ENCODE measurements at regions of chr1 and their contacts with region 1.

Region 1: DNA sequence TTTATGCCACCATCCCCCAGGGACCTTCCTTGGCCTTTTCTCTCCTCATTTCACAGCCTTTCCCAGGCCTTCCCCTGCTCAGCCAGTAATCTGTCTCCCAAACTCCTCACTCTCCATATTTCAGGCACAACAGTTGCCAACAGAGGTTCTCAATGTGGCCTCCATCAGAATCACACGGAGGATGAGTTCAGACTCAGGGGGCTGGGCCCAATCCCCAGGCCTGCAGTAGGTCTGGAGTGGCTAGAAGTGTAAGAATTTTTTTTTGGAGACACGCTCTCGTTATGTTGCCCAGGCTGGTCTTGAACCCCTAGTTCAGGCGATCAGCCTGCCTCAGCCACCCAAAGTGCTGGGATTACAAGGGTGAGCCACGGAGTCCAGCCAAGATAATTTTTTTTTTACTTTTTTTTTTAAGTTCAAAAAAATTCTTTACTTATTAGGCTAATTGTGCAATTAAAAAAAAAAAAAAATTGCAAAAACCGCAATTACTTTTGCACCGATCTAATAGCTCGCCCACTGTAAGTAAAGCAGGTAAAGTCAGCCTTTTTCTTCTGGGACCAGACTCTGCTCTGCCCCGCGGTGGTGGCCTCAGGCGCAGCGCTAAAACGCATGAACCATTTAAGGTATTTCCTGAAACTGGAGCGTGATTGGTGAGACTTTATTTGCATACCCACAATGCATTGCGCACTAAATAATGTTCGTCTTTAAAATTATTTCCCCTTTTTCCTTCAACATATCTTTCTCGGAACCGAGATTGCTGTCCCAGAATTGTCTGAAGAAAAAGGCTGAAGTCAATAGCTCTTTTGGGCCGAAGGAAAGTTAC is 18.7 kb downstream of the KIAA2013 start:
- DNase-seq: peak; percentile 86 to 98 (median 90)
- ATAC-seq: peak; percentile 72
- H3K4me3 ChIP-seq: no peak overlapping the region
- H3K27ac ChIP-seq: peak overlapping the region; percentile 100
- H3K4me1 ChIP-seq: peaks cover 15 to 27% of the 10 kb centered on the region in 2 experiments
- H3K27me3 ChIP-seq: no peaks in the 10 kb centered on the region
- CTCF ChIP-seq: peak; percentile 87 to 98 (median 96)
- EP300 ChIP-seq: no peak
- POLR2A ChIP-seq: no peak
- RAD21 ChIP-seq: peak; percentile 61 to 78

Region 2: GRCh38 chr1:11681071-11681771 is 226.3 kb before region 1 on chr1 and contains the start of gene MAD2L2:
- CTCF ChIA-PET with region 1: no interaction called
- POLR2A ChIA-PET with region 1: interaction called, 13 read pairs
- in situ Hi-C with region 1: no loop called
- intact Hi-C with region 1: no loop called
- DNase-seq: peak; percentile 95 to 99 (median 98)
- ATAC-seq: peak; percentile 94
- H3K4me3 ChIP-seq: peak within 1 kb of the TSS; percentile 99
- H3K27ac ChIP-seq: peak within 1 kb of the TSS; percentile 93
- H3K4me1 ChIP-seq: peaks cover 11 to 32% of the 10 kb centered on the region in 2 experiments
- H3K27me3 ChIP-seq: no peaks in the 10 kb centered on the region
- CTCF ChIP-seq: no peak
- EP300 ChIP-seq: peak; percentile 40; the same call in 1 of the 2 replicates
- POLR2A ChIP-seq: peak; percentile 81
- RAD21 ChIP-seq: no peak
- polyA plus RNA-seq, gene MAD2L2: 12.4 to 25.9 TPM

Region 3: GRCh38 chr1:11797525-11798216 is 109.8 kb before region 1 on chr1:
- CTCF ChIA-PET with region 1: no interaction called
- POLR2A ChIA-PET with region 1: interaction called, 107 read pairs
- in situ Hi-C with region 1: no loop called
- intact Hi-C with region 1: loop called (anchors 1 kb)
- DNase-seq: peak; percentile 84 to 98 (median 88)
- ATAC-seq: peak; percentile 76
- H3K4me3 ChIP-seq: peak overlapping the region; percentile 0; the same call in 1 of the 2 replicates
- H3K27ac ChIP-seq: peak overlapping the region; percentile 100
- H3K4me1 ChIP-seq: peaks cover 67 to 71% of the 10 kb centered on the region in 2 experiments
- H3K27me3 ChIP-seq: no peaks in the 10 kb centered on the region
- CTCF ChIP-seq: no peak
- EP300 ChIP-seq: peak; percentile 99
- POLR2A ChIP-seq: no peak; the same call in none of the 2 replicates
- RAD21 ChIP-seq: peak; percentile 4 to 35; a peak in 2 of 4 replicates

Region 4: DNA sequence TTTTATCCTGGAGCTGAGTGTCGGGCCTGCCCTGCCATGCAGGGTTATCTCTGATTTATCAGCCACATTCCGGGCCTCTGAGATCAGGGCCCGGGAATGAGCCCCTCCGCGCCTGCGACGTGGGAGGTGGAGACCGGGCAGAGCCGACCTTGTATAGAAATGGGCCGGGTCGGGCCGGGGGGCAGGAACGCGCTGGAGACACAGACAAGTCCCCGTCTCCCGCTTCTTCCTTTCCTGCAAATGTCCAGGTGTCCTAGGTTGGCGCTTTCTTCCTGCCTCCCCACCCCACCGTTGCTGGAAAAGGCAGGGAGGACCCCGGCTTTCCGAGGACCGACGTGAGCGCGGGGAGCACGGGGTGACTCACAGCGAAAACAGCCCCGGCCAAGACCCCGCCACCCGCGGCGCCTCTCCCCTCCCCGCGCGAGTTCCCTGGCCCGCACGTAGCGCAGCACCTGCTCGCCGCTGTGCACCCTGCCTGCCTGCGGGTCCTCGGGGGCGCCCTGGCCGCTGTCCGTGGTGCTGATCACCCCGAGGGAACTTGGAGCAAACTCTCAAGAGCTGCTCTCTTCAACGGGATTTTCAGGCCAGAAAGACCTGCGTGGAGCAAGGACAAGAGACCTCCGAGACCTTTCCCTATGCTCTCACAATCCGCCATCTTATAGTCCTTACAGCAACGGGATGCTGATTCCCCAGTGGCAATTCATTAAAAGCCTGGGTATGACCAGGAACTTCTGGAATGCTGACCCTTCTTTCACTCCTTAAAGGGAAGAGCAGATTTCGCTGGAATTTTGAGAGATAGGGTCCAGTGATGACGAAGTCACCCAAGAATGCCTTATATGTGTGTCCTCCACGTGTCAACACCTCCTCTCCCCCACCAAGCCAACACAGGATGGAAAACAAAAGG is 48.3 kb before region 1 on chr1:
- CTCF ChIA-PET with region 1: no interaction called
- POLR2A ChIA-PET with region 1: interaction called, 96 read pairs
- in situ Hi-C with region 1: no loop called
- intact Hi-C with region 1: no loop called
- DNase-seq: peak; percentile 89 to 97 (median 94)
- ATAC-seq: peak; percentile 99
- H3K4me3 ChIP-seq: no peak overlapping the region
- H3K27ac ChIP-seq: no peak overlapping the region
- H3K4me1 ChIP-seq: peaks cover 0 to 10% of the 10 kb centered on the region in 2 experiments; a peak in 2 of 5 replicates
- H3K27me3 ChIP-seq: peaks cover 40 to 45% of the 10 kb centered on the region in 2 experiments; a peak in 4 of 5 replicates
- CTCF ChIP-seq: peak; percentile 60 to 79 (median 69)
- EP300 ChIP-seq: no peak
- POLR2A ChIP-seq: no peak
- RAD21 ChIP-seq: peak in 1 of 2 experiments; percentile 46; a peak in 2 of 4 replicates

Region 5: GRCh38 chr1:11934302-11935056 is 27.0 kb after region 1 on chr1 and contains the start of gene PLOD1:
- CTCF ChIA-PET with region 1: no interaction called
- POLR2A ChIA-PET with region 1: interaction called, 130 read pairs
- in situ Hi-C with region 1: no loop called
- intact Hi-C with region 1: no loop called
- DNase-seq: peak; percentile 95 to 97 (median 96)
- ATAC-seq: peak; percentile 93
- H3K4me3 ChIP-seq: peak within 1 kb of the TSS; percentile 75
- H3K27ac ChIP-seq: peak within 1 kb of the TSS; percentile 97
- H3K4me1 ChIP-seq: peaks cover 41 to 56% of the 10 kb centered on the region in 2 experiments
- H3K27me3 ChIP-seq: no peaks in the 10 kb centered on the region; a peak in 1 of 5 replicates
- CTCF ChIP-seq: no peak
- EP300 ChIP-seq: no peak
- POLR2A ChIP-seq: peak; percentile 88
- RAD21 ChIP-seq: no peak
- polyA plus RNA-seq, gene PLOD1: 16.6 to 27.1 TPM

Region 6: DNA sequence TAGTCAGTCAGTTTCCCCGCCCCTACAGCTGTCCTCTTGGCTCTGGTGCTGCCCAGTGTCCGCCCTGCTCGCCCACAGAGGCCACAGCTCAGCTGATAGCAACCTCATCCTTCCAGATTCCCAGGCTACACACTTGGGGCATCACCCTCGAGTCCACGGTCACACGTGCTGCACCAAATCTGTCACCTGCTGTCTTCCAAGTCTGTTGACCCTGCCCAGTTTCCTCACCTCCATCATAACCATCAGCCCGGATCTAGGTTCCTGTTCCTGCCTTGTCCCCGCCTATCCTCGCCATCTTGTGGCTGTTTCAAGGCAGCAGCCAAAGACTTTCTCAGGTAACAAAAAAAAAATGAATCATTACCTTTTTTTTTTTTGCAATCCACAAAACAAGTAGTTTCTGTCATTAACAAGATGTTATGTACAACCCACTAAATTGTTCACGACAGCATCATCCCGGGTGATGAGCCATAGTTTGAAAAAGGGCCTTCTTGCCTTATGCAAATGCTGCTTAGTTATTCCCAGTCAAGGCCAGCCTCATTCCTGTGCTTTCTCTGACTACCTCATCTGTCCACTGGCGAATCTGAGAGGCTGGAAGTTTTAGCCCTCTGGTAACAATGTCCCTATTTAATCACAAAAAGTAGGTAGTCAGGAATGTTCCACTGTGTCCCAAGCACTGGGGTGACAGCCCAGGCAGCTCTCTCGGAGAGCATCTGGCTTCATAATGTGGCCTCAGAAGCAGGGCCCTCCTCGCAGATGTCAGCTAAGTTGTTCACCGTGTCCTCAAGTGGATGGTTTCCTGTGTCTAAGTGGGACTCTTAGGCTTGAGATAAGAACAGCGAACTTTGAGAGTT is 106.9 kb after region 1 on chr1:
- CTCF ChIA-PET with region 1: no interaction called
- POLR2A ChIA-PET with region 1: interaction called, 60 read pairs
- in situ Hi-C with region 1: no loop called
- intact Hi-C with region 1: loop called (anchors 5 kb)
- DNase-seq: peak; percentile 61 to 72 (median 64)
- ATAC-seq: peak; percentile 45
- H3K4me3 ChIP-seq: no peak overlapping the region
- H3K27ac ChIP-seq: peak overlapping the region; percentile 75
- H3K4me1 ChIP-seq: peaks cover 37 to 45% of the 10 kb centered on the region in 2 experiments
- H3K27me3 ChIP-seq: no peaks in the 10 kb centered on the region
- CTCF ChIP-seq: peak; percentile 36 to 56 (median 54); a peak in 5 of 6 replicates
- EP300 ChIP-seq: no peak
- POLR2A ChIP-seq: peak; percentile 60; the same call in 1 of the 2 replicates
- RAD21 ChIP-seq: 0 out of 4 replicates have a peak, but pooled peaks of 1 of the 2 experiments have one; percentile 3

Region 7: GRCh38 chr1:12078938-12079861 is 171.7 kb after region 1 on chr1:
- CTCF ChIA-PET with region 1: no interaction called
- POLR2A ChIA-PET with region 1: interaction called, 73 read pairs
- in situ Hi-C with region 1: no loop called
- intact Hi-C with region 1: loop called (anchors 2 kb)
- DNase-seq: peak; percentile 74 to 83 (median 78)
- ATAC-seq: peak; percentile 68
- H3K4me3 ChIP-seq: no peak overlapping the region
- H3K27ac ChIP-seq: peak overlapping the region; percentile 49; the same call in 1 of the 3 replicates
- H3K4me1 ChIP-seq: peaks cover 46 to 50% of the 10 kb centered on the region in 2 experiments
- H3K27me3 ChIP-seq: no peaks in the 10 kb centered on the region
- CTCF ChIP-seq: peak; percentile 85 to 91 (median 86)
- EP300 ChIP-seq: no peak
- POLR2A ChIP-seq: no peak
- RAD21 ChIP-seq: peak; percentile 59 to 87

Measured in K562 (cell line).